K562 (cell line): ENCODE measurements at regions of chr4 and their contacts with region 1.

Region 1: GRCh38 chr4:6926681-6927478 is 17.3 kb downstream of the TBC1D14 start:
- DNase-seq: peak; percentile 64 to 81 (median 78)
- ATAC-seq: peak; percentile 87
- H3K4me3 ChIP-seq: no peak overlapping the region
- H3K27ac ChIP-seq: no peak overlapping the region; the same call in 2 of the 3 replicates
- H3K4me1 ChIP-seq: peaks cover 28 to 40% of the 10 kb centered on the region in 2 experiments
- H3K27me3 ChIP-seq: no peaks in the 10 kb centered on the region
- CTCF ChIP-seq: no peak
- EP300 ChIP-seq: no peak
- POLR2A ChIP-seq: no peak
- RAD21 ChIP-seq: no peak

Region 2: GRCh38 chr4:6909073-6909965 is 17.6 kb before region 1 on chr4 and contains the start of gene TBC1D14:
- CTCF ChIA-PET with region 1: no interaction called
- POLR2A ChIA-PET with region 1: interaction called, 15 read pairs
- in situ Hi-C with region 1: no loop called
- intact Hi-C with region 1: no loop called
- DNase-seq: peak; percentile 90 to 96 (median 94)
- ATAC-seq: peak; percentile 86
- H3K4me3 ChIP-seq: peak within 1 kb of the TSS; percentile 94
- H3K27ac ChIP-seq: peak within 1 kb of the TSS; percentile 98
- H3K4me1 ChIP-seq: peaks cover 48 to 58% of the 10 kb centered on the region in 2 experiments
- H3K27me3 ChIP-seq: no peaks in the 10 kb centered on the region
- CTCF ChIP-seq: 0 out of 6 replicates have a peak, but pooled peaks of 2 of the 3 experiments have one; percentile 19 to 23
- EP300 ChIP-seq: 0 out of 2 replicates have a peak, but pooled peaks have one; percentile 27
- POLR2A ChIP-seq: peak; percentile 78
- RAD21 ChIP-seq: no peak
- polyA plus RNA-seq, gene TBC1D14: 2.1 to 2.7 TPM